HepG2 (cell line): ENCODE measurements at regions of chr11 and their contacts with region 1.

Region 1: GRCh38 chr11:63768237-63769043 is at the start of gene ZFTA:
- DNase-seq: no peak
- ATAC-seq: peak; percentile 1
- H3K4me3 ChIP-seq: peak within 1 kb of the TSS; percentile 65 to 98 (median 85)
- H3K27ac ChIP-seq: peak within 1 kb of the TSS; percentile 86
- H3K4me1 ChIP-seq: peaks cover 43% of the 10 kb centered on the region
- H3K27me3 ChIP-seq: peaks cover 0 to 4% of the 10 kb centered on the region in 2 experiments; a peak in 1 of 5 replicates
- CTCF ChIP-seq: peak; percentile 52; the same call in 1 of the 2 replicates
- EP300 ChIP-seq: no peak
- POLR2A ChIP-seq: peak in 1 of 2 experiments; percentile 4; a peak in 1 of 4 replicates
- RAD21 ChIP-seq: peak; percentile 90
- total RNA-seq, gene ZFTA: 6.5 and 10.4 TPM in 2 replicates

Region 2: GRCh38 chr11:63599211-63600122 is 169.0 kb before region 1 on chr11:
- CTCF ChIA-PET with region 1: no interaction called
- POLR2A ChIA-PET with region 1: no interaction called
- in situ Hi-C with region 1: no loop called
- intact Hi-C with region 1: no loop called
- DNase-seq: no peak
- ATAC-seq: no peak
- H3K4me3 ChIP-seq: no peak overlapping the region
- H3K27ac ChIP-seq: no peak overlapping the region
- H3K4me1 ChIP-seq: peaks cover 24% of the 10 kb centered on the region
- H3K27me3 ChIP-seq: no peaks in the 10 kb centered on the region
- CTCF ChIP-seq: no peak
- EP300 ChIP-seq: no peak
- POLR2A ChIP-seq: no peak
- RAD21 ChIP-seq: no peak

Region 3: DNA sequence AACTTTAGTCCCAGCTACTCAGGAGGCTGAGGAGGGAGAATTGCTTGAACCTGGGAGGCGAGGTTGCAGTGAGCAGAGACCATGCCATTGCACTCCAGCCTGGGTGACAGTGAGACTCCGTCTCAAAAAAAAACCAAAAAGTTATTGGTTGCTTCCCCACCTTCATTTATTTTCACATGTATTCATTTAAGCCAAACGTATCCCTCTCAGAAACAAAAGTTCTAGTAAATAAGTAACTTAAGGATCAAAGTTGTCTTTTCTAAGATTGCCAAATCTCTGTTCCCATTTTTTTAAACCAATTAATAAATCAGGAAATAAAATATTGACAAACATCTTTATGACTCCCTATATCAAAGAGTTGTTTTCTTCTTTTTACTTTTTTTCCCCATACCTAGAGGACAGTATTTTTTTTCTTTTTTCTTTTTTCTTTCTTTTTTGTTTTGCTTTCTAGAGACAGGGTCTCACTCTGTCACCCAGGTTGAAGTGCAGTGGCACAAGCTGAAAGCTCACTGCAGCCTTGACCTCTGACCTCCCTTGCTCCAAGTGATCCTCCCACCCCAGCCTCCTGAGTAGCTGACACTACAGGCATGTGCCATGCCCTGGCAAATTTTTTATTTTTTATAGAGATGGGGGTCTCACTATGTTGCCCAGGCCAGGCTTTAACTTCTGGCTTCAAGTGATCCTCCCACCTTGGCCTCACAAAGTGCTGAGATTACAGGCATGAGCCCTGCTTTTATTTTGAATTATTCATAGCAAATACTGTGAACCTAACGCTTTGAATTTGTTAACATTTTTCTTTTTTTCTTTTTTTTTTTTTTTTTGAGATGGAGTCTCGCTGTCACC is 11.3 kb before region 1 on chr11:
- CTCF ChIA-PET with region 1: no interaction called
- POLR2A ChIA-PET with region 1: interaction called, 22 read pairs
- in situ Hi-C with region 1: no loop called
- intact Hi-C with region 1: no loop called
- DNase-seq: peak; percentile 52
- ATAC-seq: peak; percentile 56
- H3K4me3 ChIP-seq: no peak overlapping the region
- H3K27ac ChIP-seq: peak overlapping the region; percentile 35
- H3K4me1 ChIP-seq: peaks cover 20% of the 10 kb centered on the region
- H3K27me3 ChIP-seq: no peaks in the 10 kb centered on the region; a peak in 1 of 5 replicates
- CTCF ChIP-seq: no peak
- EP300 ChIP-seq: no peak
- POLR2A ChIP-seq: no peak
- RAD21 ChIP-seq: no peak

Region 4: DNA sequence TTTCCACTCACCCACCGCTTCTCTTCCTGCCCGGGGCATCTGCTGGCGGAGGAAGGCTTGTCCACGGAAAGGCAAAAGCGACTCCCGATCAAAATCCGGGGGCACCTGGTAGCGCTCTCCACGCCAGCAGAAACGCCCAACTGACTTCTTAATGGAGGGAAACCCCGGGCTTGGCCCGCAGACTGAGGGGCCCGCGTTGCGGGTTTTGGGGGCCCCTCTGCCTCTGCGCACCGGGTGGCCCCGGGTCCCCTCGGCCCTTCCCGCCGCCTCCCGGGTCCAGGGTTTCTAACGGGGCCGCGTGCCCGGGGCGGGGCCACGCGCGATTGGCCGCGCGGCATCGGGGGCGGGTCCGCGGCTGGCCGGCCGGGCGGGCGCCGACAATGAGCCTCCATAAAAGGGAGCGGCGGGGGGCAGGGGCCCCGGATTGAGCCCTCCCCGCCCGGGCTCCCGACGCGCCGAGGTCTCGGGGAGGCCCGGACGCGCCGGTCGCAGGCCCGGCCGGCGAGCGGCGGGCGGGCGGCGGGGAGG is 44.7 kb after region 1 on chr11 and contains the start of gene SPINDOC:
- CTCF ChIA-PET with region 1: no interaction called
- POLR2A ChIA-PET with region 1: interaction called, 14 read pairs
- in situ Hi-C with region 1: no loop called
- intact Hi-C with region 1: loop called (anchors 2 kb)
- DNase-seq: peak; percentile 47
- ATAC-seq: peak; percentile 82
- H3K4me3 ChIP-seq: peak within 1 kb of the TSS; percentile 72 to 97 (median 95)
- H3K27ac ChIP-seq: peak within 1 kb of the TSS; percentile 75
- H3K4me1 ChIP-seq: peaks cover 56% of the 10 kb centered on the region
- H3K27me3 ChIP-seq: no peaks in the 10 kb centered on the region
- CTCF ChIP-seq: no peak
- EP300 ChIP-seq: 0 out of 4 replicates have a peak, but pooled peaks of 1 of the 2 experiments have one; percentile 3
- POLR2A ChIP-seq: peak; percentile 35 to 69; a peak in 3 of 4 replicates
- RAD21 ChIP-seq: peak; percentile 20; the same call in 1 of the 2 replicates
- total RNA-seq, gene SPINDOC: 23.6 and 29.9 TPM in 2 replicates

Region 5: GRCh38 chr11:63871962-63872799 is 103.7 kb after region 1 on chr11:
- CTCF ChIA-PET with region 1: no interaction called
- POLR2A ChIA-PET with region 1: no interaction called
- in situ Hi-C with region 1: no loop called
- intact Hi-C with region 1: loop called (anchors 2 kb)
- DNase-seq: peak; percentile 96
- ATAC-seq: peak; percentile 99
- H3K4me3 ChIP-seq: peak overlapping the region in 1 of 3 experiments; percentile 35; a peak in 2 of 6 replicates
- H3K27ac ChIP-seq: peak overlapping the region; percentile 64
- H3K4me1 ChIP-seq: peaks cover 26% of the 10 kb centered on the region
- H3K27me3 ChIP-seq: no peaks in the 10 kb centered on the region
- CTCF ChIP-seq: peak; percentile 95
- EP300 ChIP-seq: peak in 1 of 2 experiments; percentile 38; a peak in 1 of 4 replicates
- POLR2A ChIP-seq: no peak
- RAD21 ChIP-seq: peak; percentile 91

Region 6: GRCh38 chr11:63916837-63917691 is 148.6 kb after region 1 on chr11 and contains the start of gene RCOR2:
- CTCF ChIA-PET with region 1: no interaction called
- POLR2A ChIA-PET with region 1: interaction called, 5 read pairs
- in situ Hi-C with region 1: loop called (anchors 10 kb)
- intact Hi-C with region 1: no loop called
- DNase-seq: peak; percentile 70
- ATAC-seq: peak; percentile 0
- H3K4me3 ChIP-seq: peak within 1 kb of the TSS; percentile 64 to 84 (median 76)
- H3K27ac ChIP-seq: peak within 1 kb of the TSS; percentile 82
- H3K4me1 ChIP-seq: peaks cover 48% of the 10 kb centered on the region
- H3K27me3 ChIP-seq: no peaks in the 10 kb centered on the region; a peak in 2 of 5 replicates
- CTCF ChIP-seq: 0 out of 2 replicates have a peak, but pooled peaks have one; percentile 1
- EP300 ChIP-seq: no peak
- POLR2A ChIP-seq: no peak
- RAD21 ChIP-seq: no peak
- total RNA-seq, gene RCOR2: 6.9 and 8.5 TPM in 2 replicates